A549 (cell line): ENCODE measurements at regions of chr12 and their contacts with region 1.

Region 1: GRCh38 chr12:6833189-6833890 is 5.1 kb downstream of the P3H3 start:
- DNase-seq: no peak
- ATAC-seq: no peak
- H3K4me3 ChIP-seq: no peak overlapping the region
- H3K27ac ChIP-seq: no peak overlapping the region
- H3K4me1 ChIP-seq: peaks cover 6% of the 10 kb centered on the region; the same call in 1 of the 3 replicates
- CTCF ChIP-seq: no peak
- EP300 ChIP-seq: no peak
- POLR2A ChIP-seq: no peak
- RAD21 ChIP-seq: no peak

Region 2: GRCh38 chr12:6784296-6784695 is 49.0 kb before region 1 on chr12:
- CTCF ChIA-PET with region 1: interaction called, 193 read pairs
- POLR2A ChIA-PET with region 1: no interaction called
- DNase-seq: no peak
- ATAC-seq: no peak
- H3K4me3 ChIP-seq: no peak overlapping the region
- H3K27ac ChIP-seq: no peak overlapping the region
- H3K4me1 ChIP-seq: no peaks in the 10 kb centered on the region
- CTCF ChIP-seq: no peak
- EP300 ChIP-seq: no peak
- POLR2A ChIP-seq: no peak
- RAD21 ChIP-seq: no peak

Region 3: DNA sequence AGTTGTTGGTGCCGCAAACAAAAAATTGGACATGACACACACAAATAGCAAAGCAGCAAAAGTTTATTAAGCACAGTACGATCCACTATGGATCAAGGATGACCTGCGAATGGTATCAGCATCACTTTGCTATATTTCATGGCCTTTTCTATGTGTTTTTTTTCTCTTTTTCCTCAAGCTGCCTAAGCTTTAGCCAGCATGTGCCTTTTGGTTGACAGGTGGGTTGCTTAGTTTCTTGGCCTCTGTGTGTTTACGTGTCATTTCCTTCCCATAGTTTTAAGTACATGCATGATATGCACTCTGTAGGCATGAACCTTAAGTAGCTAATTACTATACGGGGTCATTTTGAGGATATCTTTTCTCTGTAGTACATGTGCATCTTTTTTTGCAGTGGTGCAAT is 34.2 kb before region 1 on chr12:
- CTCF ChIA-PET with region 1: no interaction called
- POLR2A ChIA-PET with region 1: no interaction called
- DNase-seq: no peak
- ATAC-seq: no peak
- H3K4me3 ChIP-seq: no peak overlapping the region
- H3K27ac ChIP-seq: no peak overlapping the region
- H3K4me1 ChIP-seq: no peaks in the 10 kb centered on the region
- CTCF ChIP-seq: no peak
- EP300 ChIP-seq: no peak
- POLR2A ChIP-seq: no peak
- RAD21 ChIP-seq: no peak

Region 4: DNA sequence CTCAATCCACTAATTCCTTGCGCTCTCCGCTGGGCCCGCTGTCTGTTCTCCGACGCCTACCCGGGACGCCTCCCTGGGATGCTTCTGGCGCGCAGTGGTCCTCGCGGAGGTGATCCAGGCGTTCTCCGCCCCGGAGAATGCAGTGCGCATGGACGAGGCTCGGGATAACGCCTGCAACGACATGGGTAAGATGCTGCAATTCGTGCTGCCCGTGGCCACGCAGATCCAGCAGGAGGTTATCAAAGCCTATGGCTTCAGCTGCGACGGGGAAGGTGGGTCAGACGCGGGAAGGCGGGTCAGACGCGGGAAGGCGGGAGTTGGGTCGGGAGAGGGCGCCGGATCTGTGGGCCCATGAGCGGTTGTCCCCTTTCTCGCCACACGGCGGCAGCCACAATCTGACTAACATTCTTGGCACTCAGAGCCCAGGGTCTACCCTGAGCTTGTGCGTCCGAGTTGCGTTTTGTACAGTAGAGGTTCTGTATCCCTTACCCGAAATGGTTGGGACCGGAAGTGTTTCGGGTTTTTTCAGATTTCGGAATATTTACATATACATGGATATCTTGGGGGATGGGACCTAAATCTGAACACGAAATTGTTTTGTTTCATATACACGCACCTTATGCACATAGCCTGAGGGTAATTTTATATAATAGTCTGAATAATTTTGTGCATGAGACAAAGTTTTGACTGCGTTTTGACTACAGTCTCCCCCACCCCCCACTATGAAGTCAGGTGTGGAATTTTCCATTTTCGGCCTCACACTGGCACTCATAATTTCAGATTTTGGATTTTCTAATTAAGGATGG is 111.2 kb after region 1 on chr12:
- CTCF ChIA-PET with region 1: no interaction called
- POLR2A ChIA-PET with region 1: no interaction called
- DNase-seq: peak; percentile 93 to 97
- ATAC-seq: peak; percentile 52 to 73
- H3K4me3 ChIP-seq: peak overlapping the region; percentile 59
- H3K27ac ChIP-seq: peak overlapping the region; percentile 80 to 90
- H3K4me1 ChIP-seq: peaks cover 36% of the 10 kb centered on the region
- CTCF ChIP-seq: peak; percentile 85
- EP300 ChIP-seq: no peak
- POLR2A ChIP-seq: no peak; the same call in 1 of the 2 replicates
- RAD21 ChIP-seq: peak; percentile 87